ENCODE measurements at regions of chr17 and their contacts with region 1.

Region 1: DNA sequence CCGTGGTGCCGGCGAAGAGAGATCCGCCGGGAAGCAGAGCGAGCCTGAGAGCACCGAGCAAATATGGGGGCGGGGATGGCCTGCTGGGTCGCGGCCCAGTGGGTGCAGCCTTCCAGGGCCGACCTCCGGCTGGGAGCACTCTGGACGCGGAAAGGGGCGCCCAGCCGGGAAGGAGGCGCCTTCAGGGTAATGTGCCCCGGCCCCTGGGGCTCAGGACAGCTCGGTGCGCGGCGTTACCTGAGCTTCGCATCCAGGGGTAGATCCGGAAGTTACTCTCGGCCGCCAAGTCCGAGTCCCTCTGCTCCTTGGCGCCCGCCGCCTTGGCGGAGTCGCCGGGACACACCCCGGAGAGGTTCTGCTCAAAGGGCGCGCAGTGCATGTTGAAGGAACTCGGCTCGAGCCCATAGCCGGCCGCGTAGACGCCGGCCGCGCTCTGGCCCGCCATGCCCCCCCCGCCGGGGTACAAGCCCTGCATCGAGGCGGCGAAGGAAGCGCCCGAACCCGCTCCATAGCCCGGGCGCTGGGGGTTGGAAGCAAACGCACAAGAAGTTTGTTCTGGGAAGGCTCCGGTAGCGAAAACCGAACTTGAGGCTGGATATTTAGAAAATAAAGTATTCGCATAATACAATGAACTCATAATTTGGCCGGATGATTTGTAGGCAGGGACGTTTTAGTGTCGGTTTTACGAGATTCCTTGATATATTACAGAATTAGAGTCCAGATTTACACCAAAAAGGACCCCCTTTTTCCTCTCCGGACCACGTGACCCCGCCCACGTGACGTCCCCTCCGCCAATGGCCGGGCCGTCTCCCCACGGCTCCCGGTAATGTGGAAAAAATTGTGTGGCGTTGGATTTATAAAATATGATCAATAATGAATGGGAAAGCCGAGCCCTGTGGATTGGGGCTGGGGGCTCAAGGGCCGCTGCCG is at the start of gene HOXB7:
- DNase-seq: peak; percentile 77
- H3K4me3 Mint-ChIP-seq: peak within 1 kb of the TSS; percentile 88
- H3K27ac Mint-ChIP-seq: peak within 1 kb of the TSS; percentile 53
- H3K4me1 Mint-ChIP-seq: peaks cover 39% of the 10 kb centered on the region
- H3K27me3 Mint-ChIP-seq: peaks cover 74% of the 10 kb centered on the region
- total RNA-seq, gene HOXB7: 1.6 to 1.7 TPM

Region 2: DNA sequence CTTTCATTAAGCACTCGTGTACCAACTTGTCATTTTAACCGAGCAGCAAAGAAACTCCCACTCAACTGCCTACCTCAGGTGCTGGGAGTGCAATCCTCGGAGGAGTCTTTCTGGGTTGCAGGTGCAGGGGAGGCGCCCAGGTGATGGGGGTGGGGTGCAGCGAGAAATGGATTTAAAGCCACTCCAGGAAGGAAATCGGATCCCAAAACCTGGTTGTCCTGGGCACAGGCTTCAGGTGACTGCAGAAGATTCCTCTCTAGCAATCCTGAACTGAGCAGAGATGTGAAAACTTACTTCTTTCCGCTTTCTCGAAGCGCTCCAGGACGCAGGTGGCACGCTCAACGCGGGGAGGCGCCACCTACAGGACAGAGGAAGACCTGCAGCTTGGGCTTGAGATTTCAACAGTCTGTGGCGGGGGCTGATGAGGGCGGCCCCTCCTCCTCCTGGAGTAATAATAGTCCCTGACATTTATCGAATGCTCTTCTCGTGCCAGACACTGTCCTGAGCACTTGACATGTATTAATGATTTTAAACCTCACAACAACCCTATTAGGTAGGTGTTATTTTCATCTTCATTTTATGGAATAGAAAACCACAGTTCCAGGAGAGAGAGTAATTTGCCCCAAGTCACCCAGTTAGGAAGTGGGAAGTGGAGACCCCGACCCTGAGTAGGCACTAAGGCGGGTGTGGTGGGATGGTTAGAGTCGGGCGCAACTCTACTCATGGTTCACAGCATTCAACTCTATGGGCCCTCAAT is 153.3 kb before region 1 on chr17:
- CTCF ChIA-PET with region 1: no interaction called
- POLR2A ChIA-PET with region 1: no interaction called
- DNase-seq: peak; percentile 82
- H3K4me3 Mint-ChIP-seq: peak overlapping the region; percentile 43
- H3K27ac Mint-ChIP-seq: peak overlapping the region; percentile 24
- H3K4me1 Mint-ChIP-seq: peaks cover 74% of the 10 kb centered on the region
- H3K27me3 Mint-ChIP-seq: peaks cover 2% of the 10 kb centered on the region

Region 3: DNA sequence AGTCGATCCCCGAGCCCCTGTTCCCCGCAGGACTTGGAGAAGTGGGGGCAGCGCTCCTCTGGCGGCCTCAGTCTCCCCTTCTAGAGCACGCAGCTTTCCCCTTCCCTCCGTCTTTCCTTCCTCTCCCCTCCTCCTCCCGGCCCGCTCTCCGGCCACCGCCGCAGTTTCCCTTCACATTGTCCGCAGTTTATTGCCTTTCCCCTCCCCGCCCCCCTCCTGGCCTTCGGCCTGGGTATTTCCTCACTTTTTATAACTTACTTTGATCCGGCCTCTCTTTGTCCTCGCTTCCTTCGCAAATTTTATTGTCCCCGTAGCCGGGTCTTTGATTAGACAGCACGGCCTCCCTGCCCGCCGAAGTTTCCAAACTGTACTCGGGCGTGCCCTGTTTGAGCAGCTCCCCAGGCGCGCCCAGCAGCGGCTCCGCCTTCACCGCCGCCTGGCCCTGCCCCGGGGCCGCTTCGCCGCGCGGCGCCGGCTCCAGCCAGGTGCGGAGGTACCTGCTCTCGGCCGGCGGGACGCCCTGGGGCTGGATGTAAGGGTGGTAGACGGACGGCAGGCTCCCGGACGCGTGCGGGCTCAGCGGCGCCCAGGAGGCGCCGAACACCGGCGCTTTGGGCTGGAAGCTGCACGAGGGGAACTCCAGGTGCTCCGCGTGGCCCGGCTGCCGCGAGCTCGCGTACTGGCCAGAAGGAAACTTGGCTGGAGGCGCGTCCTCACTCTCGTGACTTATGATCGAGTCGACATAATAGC is 15.1 kb after region 1 on chr17:
- CTCF ChIA-PET with region 1: interaction called, 9 read pairs
- POLR2A ChIA-PET with region 1: interaction called, 10 read pairs
- DNase-seq: peak; percentile 53
- H3K4me3 Mint-ChIP-seq: peak overlapping the region; percentile 74
- H3K27ac Mint-ChIP-seq: no peak overlapping the region
- H3K4me1 Mint-ChIP-seq: peaks cover 17% of the 10 kb centered on the region
- H3K27me3 Mint-ChIP-seq: peaks cover 92% of the 10 kb centered on the region

Measured in activated CD4-positive, alpha-beta memory T cell treated with anti-CD3 and anti-CD28 coated beads, Interleukin-2, amount 10 ng/mL, durations not matched to agents 7 days and 5 days (primary cell).